PC-9 (cell line): ENCODE measurements at regions of chr3 and their contacts with region 1.

Region 1: DNA sequence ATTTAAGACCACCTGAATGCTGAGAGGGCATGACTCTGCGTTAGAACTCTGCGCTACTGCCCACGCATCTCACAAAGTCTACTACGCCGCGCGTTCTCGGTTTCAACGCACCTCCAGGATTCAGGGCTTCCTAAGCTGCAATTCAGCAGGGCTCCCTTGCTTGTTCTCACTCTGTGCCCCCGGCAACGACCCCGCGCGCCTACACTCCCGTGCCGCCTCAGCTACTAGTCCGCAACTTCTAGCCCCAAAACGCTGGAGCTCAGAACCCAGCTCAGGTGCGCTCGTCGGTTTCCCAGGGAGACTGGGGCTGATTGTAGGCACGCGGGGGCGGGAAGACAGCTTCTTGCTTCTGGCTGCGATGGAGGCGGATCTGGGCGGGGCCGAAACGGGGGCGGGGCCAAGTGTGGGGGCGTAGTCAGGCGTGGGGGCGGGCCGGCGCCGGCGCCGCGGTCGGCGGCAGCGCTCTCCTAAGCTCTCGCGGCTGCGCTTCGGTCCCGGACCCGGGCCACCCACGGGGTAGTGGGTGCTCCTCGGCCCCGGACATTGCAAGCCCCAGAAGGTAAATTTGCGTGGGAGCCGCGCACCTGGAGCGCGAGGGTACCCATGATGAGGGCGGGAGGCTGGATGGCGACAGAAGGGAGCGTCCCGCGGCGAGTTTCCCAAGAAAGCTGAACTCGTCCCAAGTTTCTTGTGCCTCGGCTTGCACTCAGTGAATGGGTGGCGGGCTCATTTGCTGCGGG is at the start of gene ARHGEF26:
- DNase-seq: peak; percentile 70 to 90
- H3K4me3 ChIP-seq: peak within 1 kb of the TSS; percentile 94
- H3K27ac ChIP-seq: no peak within 1 kb of the TSS
- H3K4me1 ChIP-seq: peaks cover 13% of the 10 kb centered on the region
- H3K27me3 ChIP-seq: no peaks in the 10 kb centered on the region
- CTCF ChIP-seq: no peak
- total RNA-seq, gene ARHGEF26: 7.9 and 10.0 TPM in 2 replicates

Region 2: GRCh38 chr3:153277029-153277428 is 844.1 kb before region 1 on chr3:
- CTCF ChIA-PET with region 1: interaction called, 11 read pairs
- POLR2A ChIA-PET with region 1: no interaction called
- intact Hi-C with region 1: no loop called
- DNase-seq: no peak
- H3K4me3 ChIP-seq: no peak overlapping the region
- H3K27ac ChIP-seq: no peak overlapping the region
- H3K4me1 ChIP-seq: no peaks in the 10 kb centered on the region
- H3K27me3 ChIP-seq: no peaks in the 10 kb centered on the region
- CTCF ChIP-seq: no peak

Region 3: DNA sequence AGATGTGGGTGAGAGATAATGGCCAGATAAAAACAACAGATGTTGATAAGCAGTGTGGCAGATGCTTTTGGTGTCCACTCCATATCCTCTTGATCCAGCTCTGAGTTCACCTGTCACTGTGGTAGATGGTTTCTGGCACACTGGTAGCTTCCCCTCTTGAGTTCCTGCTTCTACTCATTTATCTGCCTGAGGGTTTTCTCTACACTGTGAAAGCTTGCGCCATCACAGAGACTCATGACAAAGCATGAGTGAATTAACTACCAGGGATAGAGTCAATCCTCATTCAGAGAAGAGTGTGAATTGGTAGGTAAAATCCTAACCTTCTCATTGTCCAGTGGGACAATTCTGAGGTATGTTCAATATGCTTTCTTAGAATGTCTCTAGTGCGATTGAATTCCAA is 50.0 kb before region 1 on chr3:
- CTCF ChIA-PET with region 1: no interaction called
- POLR2A ChIA-PET with region 1: no interaction called
- intact Hi-C with region 1: no loop called
- DNase-seq: no peak
- H3K4me3 ChIP-seq: no peak overlapping the region
- H3K27ac ChIP-seq: no peak overlapping the region
- H3K4me1 ChIP-seq: no peaks in the 10 kb centered on the region
- H3K27me3 ChIP-seq: no peaks in the 10 kb centered on the region
- CTCF ChIP-seq: no peak

Region 4: DNA sequence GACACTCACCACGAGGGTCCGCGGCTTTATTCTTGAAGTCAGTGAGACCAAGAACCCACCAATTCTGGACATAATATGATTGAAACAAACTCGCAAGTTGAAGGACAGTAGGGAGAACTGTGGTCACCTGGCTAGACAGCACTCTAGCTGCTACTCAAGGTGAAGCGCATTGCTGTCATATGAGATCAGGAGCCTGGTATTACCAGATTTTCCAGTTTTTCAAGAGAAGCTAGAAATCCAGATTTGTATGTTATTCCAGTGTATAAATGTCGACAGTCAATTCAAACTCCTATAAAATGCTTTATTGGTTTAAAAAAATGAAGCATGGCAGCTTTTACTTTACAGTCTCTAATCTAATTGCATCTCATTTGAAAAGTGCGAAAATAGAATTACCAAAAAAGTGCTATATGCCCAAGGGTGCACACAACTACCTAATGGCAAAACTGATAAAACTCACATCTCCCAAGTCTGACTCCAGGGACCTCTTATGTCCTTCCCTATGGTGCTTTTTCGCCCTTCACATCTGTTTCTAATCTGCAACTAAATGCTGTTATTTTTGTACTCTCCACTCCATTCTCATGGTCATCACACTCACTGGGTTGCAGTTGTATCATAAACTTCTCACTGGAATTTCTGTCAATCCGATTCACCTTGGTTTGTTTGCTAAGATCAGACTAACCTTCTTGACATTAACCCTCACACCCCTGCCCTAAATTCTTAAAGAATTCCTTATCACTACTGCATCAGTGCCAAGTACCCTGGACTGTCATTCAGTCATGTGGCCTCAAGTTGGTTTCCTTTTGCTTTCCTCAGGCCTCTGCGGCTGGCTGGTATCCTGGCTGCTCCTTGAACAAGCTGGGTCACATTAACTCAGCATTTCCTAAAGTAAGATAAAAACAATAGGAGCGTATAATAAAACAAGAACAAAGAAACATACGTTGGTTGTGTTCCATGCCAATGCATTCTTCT is 31.4 kb before region 1 on chr3:
- CTCF ChIA-PET with region 1: interaction called, 10 read pairs
- POLR2A ChIA-PET with region 1: interaction called, 3 read pairs
- intact Hi-C with region 1: no loop called
- DNase-seq: peak; percentile 37 to 93
- H3K4me3 ChIP-seq: peak overlapping the region; percentile 36; the same call in 1 of the 2 replicates
- H3K27ac ChIP-seq: peak overlapping the region; percentile 39
- H3K4me1 ChIP-seq: peaks cover 26% of the 10 kb centered on the region
- H3K27me3 ChIP-seq: no peaks in the 10 kb centered on the region
- CTCF ChIP-seq: no peak

Region 5: GRCh38 chr3:154235330-154235729 is 114.2 kb after region 1 on chr3:
- CTCF ChIA-PET with region 1: no interaction called
- POLR2A ChIA-PET with region 1: interaction called, 15 read pairs
- intact Hi-C with region 1: no loop called
- DNase-seq: no peak
- H3K4me3 ChIP-seq: no peak overlapping the region
- H3K27ac ChIP-seq: no peak overlapping the region
- H3K4me1 ChIP-seq: no peaks in the 10 kb centered on the region
- H3K27me3 ChIP-seq: no peaks in the 10 kb centered on the region
- CTCF ChIP-seq: no peak

Region 6: DNA sequence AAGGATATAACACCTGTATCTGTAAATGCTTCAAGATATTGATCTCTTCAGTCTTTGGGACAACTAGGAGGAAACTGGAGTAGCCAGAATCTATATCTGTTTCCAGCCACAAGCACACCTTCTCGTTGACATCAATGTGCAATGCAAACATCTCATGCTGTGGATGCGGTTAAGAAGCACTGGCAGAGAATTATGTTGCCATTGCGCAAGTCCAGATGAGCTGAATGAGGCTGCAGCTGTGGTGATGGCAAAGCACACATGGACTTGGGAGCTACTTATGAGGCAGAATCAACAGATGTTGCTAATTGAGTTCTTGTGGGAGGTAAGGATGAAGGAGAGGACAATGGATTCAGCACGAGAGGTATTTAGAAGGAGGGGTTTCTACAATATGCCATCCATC is 1081.5 kb after region 1 on chr3:
- CTCF ChIA-PET with region 1: interaction called, 12 read pairs
- POLR2A ChIA-PET with region 1: no interaction called
- intact Hi-C with region 1: no loop called
- DNase-seq: no peak
- H3K4me3 ChIP-seq: no peak overlapping the region
- H3K27ac ChIP-seq: no peak overlapping the region
- H3K4me1 ChIP-seq: no peaks in the 10 kb centered on the region
- H3K27me3 ChIP-seq: no peaks in the 10 kb centered on the region
- CTCF ChIP-seq: no peak

Region 7: DNA sequence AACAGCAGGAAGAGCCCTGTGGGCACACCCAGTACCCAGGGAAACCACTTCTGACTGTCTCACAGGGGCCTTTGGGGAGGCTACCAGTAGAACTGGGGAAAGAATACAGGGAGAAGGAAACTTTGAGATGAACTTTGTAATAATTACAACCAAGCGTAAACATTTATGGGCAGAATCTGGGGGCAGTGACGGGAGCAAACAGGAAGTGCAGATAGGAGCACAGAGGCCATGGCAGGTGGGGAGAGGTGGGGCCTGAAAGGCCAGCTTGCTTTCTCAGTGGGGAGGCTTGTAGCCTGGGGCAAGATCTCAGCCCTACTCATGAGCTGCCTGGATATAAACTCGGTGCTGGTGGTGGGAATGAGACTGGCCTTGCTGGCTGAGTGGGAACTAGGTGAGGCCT is 1414.0 kb after region 1 on chr3:
- CTCF ChIA-PET with region 1: no interaction called
- POLR2A ChIA-PET with region 1: interaction called, 10 read pairs
- intact Hi-C with region 1: no loop called
- DNase-seq: peak in 1 of 2 experiments; percentile 39
- H3K4me3 ChIP-seq: no peak overlapping the region
- H3K27ac ChIP-seq: peak overlapping the region; percentile 38; the same call in 1 of the 2 replicates
- H3K4me1 ChIP-seq: peaks cover 11% of the 10 kb centered on the region; the same call in 1 of the 2 replicates
- H3K27me3 ChIP-seq: no peaks in the 10 kb centered on the region
- CTCF ChIP-seq: no peak